ENCODE measurements at regions of chrX and their contacts with region 1.

Region 1: GRCh38 chrX:118603981-118604380 is 108.4 kb downstream of the DOCK11 start:
- DNase-seq: peak; percentile 26
- H3K4me3 ChIP-seq: no peak overlapping the region
- H3K27ac ChIP-seq: peak overlapping the region in 1 of 4 donors; percentile 15
- H3K4me1 ChIP-seq: no peaks in the 10 kb centered on the region
- H3K27me3 ChIP-seq: no peaks in the 10 kb centered on the region
- CTCF ChIP-seq: peak; percentile 56 to 80 (median 63)
- EP300 ChIP-seq: no peak
- POLR2A ChIP-seq: no peak

Region 2: DNA sequence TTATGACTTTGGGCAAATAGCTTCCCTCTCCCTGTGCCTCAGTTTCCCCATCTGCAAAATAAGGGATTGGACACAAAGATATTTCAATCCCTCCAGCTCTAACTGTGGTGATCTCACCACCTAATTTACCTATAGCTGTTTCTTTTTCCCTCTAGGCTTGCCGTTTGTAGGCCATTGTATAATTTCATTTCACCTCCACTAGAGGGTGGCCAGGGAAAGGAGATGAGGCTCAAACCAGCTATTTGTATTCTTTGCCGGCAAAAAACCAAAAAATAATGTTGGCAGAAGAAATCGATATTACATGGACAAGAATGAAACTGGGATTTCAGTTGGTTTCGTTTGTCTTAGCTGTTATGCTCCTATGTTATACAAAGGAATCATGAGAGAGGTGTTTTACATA is 144.5 kb before region 1 on chrX:
- in situ Hi-C with region 1: loop called in 1 of 4 experiments (anchors 25 kb)
- intact Hi-C with region 1: loop called (anchors 5 kb)
- DNase-seq: no peak
- H3K4me3 ChIP-seq: no peak overlapping the region
- H3K27ac ChIP-seq: no peak overlapping the region
- H3K4me1 ChIP-seq: no peaks in the 10 kb centered on the region
- H3K27me3 ChIP-seq: no peaks in the 10 kb centered on the region
- CTCF ChIP-seq: peak; percentile 28 to 44 (median 36)
- EP300 ChIP-seq: no peak
- POLR2A ChIP-seq: no peak

Region 3: GRCh38 chrX:118884552-118885138 is 280.7 kb after region 1 on chrX:
- in situ Hi-C with region 1: no loop called
- intact Hi-C with region 1: no loop called
- DNase-seq: no peak
- H3K4me3 ChIP-seq: no peak overlapping the region
- H3K27ac ChIP-seq: no peak overlapping the region
- H3K4me1 ChIP-seq: no peaks in the 10 kb centered on the region
- H3K27me3 ChIP-seq: no peaks in the 10 kb centered on the region
- CTCF ChIP-seq: no peak
- EP300 ChIP-seq: no peak
- POLR2A ChIP-seq: no peak

Measured in transverse colon (tissue), 4 donors.